ENCODE measurements at regions of chr2 and their contacts with region 1.

Region 1: DNA sequence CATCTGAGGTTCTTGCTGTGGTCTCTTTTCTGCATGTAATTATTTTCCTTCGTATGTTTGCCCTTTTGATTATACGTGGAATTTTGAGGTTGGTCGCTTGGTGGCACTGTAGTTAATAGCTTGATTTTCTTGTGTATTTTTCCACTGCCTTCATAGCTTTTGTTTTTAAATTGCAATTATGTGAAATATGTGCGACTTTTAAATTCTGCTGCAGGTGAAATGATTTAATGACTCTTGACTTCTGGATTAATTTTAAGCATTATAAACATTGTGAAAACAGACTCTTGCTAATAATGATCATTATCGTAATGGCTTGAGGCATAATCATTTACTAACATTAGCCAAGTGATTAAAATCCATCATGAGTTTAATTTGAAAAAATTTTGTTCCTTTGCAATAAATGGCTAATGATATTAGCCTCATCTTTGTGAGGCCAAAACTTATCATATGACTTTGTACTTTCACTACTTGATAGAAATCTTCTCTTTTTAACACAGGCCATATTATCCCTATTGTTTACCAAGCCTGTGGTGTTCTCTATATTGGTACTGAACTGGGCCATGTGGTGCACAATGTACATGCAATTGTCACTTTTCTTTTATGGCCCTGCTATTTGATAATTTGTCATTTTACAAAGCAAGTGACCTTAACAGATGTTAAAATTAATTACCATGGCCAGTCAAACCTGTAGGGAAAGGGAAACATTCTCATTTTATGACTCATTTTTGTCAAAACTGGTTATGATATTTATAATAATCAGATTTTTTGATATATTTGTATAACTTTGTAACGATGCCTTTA is 62.8 kb upstream of the NEUROD1 start:
- DNase-seq: peak; percentile 20 to 74 (median 50)
- H3K4me3 ChIP-seq: no peak overlapping the region
- H3K27ac ChIP-seq: no peak overlapping the region
- H3K4me1 ChIP-seq: peaks cover 0 to 6% of the 10 kb centered on the region in 2 donors
- H3K27me3 ChIP-seq: no peaks in the 10 kb centered on the region
- CTCF ChIP-seq: peak; percentile 48 to 92 (median 76)
- POLR2A ChIP-seq: no peak

Region 2: DNA sequence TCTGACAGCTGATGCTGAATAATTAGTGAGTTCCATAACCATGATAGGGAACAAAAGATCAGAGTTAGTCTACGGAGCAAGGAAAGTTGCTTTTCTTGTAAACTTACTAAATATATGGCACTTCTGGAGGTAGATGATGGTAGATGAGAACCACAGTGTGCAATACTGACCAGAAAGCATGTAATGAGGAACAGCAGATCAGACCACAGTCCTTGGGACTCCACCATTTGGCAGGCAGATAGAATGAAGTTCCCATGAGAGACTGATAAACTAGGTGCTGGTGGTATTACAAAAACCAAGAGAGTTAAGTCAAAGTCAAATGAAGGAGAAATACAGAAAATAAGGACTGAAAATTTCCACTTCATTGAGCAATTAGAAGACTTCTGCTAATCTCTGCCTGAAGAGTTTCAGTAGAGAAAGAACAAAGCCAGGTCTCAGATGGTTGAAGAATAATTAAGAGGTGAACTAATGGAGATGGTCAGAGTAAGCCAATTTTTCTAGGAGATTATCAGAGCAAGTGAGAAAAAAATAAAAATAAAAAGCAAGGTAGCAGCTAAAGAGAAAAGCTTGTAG is 96.6 kb before region 1 on chr2:
- intact Hi-C with region 1: no loop called
- DNase-seq: no peak
- H3K4me3 ChIP-seq: no peak overlapping the region
- H3K27ac ChIP-seq: no peak overlapping the region
- H3K4me1 ChIP-seq: no peaks in the 10 kb centered on the region
- H3K27me3 ChIP-seq: no peaks in the 10 kb centered on the region
- CTCF ChIP-seq: no peak
- POLR2A ChIP-seq: no peak

Region 3: GRCh38 chr2:181798022-181798421 is 54.9 kb after region 1 on chr2:
- intact Hi-C with region 1: loop called in 1 of 2 experiments (anchors 5 kb)
- DNase-seq: no peak
- H3K4me3 ChIP-seq: no peak overlapping the region
- H3K27ac ChIP-seq: no peak overlapping the region
- H3K4me1 ChIP-seq: no peaks in the 10 kb centered on the region
- H3K27me3 ChIP-seq: no peaks in the 10 kb centered on the region
- CTCF ChIP-seq: no peak
- POLR2A ChIP-seq: no peak

Region 4: GRCh38 chr2:181904022-181904632 is 161.0 kb after region 1 on chr2:
- intact Hi-C with region 1: loop called (anchors 5 to 10 kb)
- DNase-seq: no peak
- H3K4me3 ChIP-seq: no peak overlapping the region
- H3K27ac ChIP-seq: no peak overlapping the region
- H3K4me1 ChIP-seq: peaks cover 0 to 22% of the 10 kb centered on the region in 2 donors
- H3K27me3 ChIP-seq: no peaks in the 10 kb centered on the region
- CTCF ChIP-seq: peak; percentile 15 to 62 (median 50)
- POLR2A ChIP-seq: no peak

Region 5: GRCh38 chr2:181953881-181954537 is 210.9 kb after region 1 on chr2:
- intact Hi-C with region 1: loop called in 1 of 2 experiments (anchors 5 kb)
- DNase-seq: peak; percentile 28 to 81 (median 59)
- H3K4me3 ChIP-seq: peak overlapping the region in 2 of 4 donors; percentile 6 to 44
- H3K27ac ChIP-seq: no peak overlapping the region
- H3K4me1 ChIP-seq: no peaks in the 10 kb centered on the region
- H3K27me3 ChIP-seq: no peaks in the 10 kb centered on the region
- CTCF ChIP-seq: peak; percentile 36 to 62 (median 54)
- POLR2A ChIP-seq: no peak

Region 6: DNA sequence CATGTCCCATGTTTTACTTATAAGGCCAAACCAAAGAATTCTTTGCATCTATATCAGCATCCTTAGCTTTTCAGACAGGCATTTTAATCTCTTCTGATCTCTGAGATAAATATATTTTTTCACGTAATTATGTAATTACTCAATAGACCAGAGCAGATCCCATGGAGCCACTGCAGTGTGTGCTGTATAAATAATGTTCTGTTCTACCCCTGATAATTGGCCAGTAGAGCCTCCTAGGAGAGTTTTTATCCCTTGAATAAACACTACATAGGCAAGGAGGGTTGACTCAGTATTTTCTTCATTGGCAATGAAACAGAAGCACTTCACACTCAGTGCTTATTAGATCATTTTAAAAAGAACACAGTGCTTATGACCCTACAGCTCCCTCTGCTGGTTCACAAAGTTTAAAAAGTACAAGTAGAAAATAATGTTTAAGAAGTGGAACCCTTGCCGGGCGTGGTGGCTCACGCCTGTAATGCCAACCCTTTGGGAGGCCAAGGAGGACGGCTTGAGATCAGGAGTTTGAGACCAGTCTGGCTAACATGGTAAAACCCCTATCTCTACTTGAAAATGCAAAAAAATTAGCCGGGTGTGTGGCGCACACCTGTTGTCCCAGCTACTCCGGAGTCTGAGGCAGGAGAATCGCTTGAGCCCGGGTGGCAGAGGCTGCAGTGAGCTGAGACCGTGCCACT is 334.5 kb after region 1 on chr2:
- intact Hi-C with region 1: loop called (anchors 5 to 10 kb)
- DNase-seq: peak in 4 of 7 donors; percentile 41 to 50 (median 44)
- H3K4me3 ChIP-seq: no peak overlapping the region
- H3K27ac ChIP-seq: no peak overlapping the region
- H3K4me1 ChIP-seq: peaks cover 0 to 10% of the 10 kb centered on the region in 2 donors
- H3K27me3 ChIP-seq: no peaks in the 10 kb centered on the region
- CTCF ChIP-seq: peak; percentile 47 to 75 (median 58)
- POLR2A ChIP-seq: no peak

Region 7: GRCh38 chr2:182193291-182193690 is 450.2 kb after region 1 on chr2:
- intact Hi-C with region 1: no loop called
- DNase-seq: no peak
- H3K4me3 ChIP-seq: no peak overlapping the region
- H3K27ac ChIP-seq: no peak overlapping the region
- H3K4me1 ChIP-seq: no peaks in the 10 kb centered on the region
- H3K27me3 ChIP-seq: no peaks in the 10 kb centered on the region
- CTCF ChIP-seq: no peak
- POLR2A ChIP-seq: no peak

Region 8: GRCh38 chr2:182240862-182241371 is 497.8 kb after region 1 on chr2:
- intact Hi-C with region 1: no loop called
- DNase-seq: peak in 6 of 7 donors; percentile 13 to 50 (median 23)
- H3K4me3 ChIP-seq: no peak overlapping the region
- H3K27ac ChIP-seq: no peak overlapping the region
- H3K4me1 ChIP-seq: no peaks in the 10 kb centered on the region
- H3K27me3 ChIP-seq: no peaks in the 10 kb centered on the region
- CTCF ChIP-seq: peak in 4 of 6 experiments; percentile 17 to 35 (median 26)
- POLR2A ChIP-seq: no peak